Activated B cell treated with CpG ODN at 0.5 μM for 24 hours (primary cell): ENCODE measurements at regions of chr17 and their contacts with region 1.

Region 1: GRCh38 chr17:74212913-74213791 is at the start of gene TTYH2:
- DNase-seq: peak; percentile 66
- ATAC-seq: peak; percentile 77
- H3K4me3 Mint-ChIP-seq: peak within 1 kb of the TSS; percentile 86
- H3K27ac Mint-ChIP-seq: peak within 1 kb of the TSS; percentile 89
- H3K4me1 Mint-ChIP-seq: peaks cover 48% of the 10 kb centered on the region
- H3K27me3 Mint-ChIP-seq: no peaks in the 10 kb centered on the region
- CTCF ChIP-seq: no peak
- total RNA-seq, gene TTYH2: 2.9 and 3.8 TPM in 2 replicates

Region 2: DNA sequence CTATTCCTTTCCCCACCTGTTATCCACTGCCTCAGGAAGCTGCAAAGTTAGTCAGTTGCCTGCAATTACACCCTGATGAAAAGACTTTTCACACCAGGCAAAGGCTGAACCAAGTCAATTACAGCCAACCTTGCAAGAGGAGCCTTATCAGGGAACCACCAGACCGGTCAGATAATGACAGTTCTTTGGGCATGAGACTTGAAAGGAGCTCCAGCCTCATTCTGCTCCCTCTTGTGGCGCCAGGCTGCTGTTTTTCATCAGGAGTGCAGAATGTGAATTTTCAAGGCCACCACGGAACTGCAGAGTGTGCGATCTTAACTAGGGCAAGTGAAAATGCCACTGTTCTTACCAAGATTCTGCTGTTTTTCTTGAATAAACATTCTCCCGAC is 83.4 kb after region 1 on chr17:
- CTCF ChIA-PET with region 1: no interaction called
- POLR2A ChIA-PET with region 1: no interaction called
- intact Hi-C with region 1: loop called (anchors 1 kb)
- DNase-seq: no peak
- ATAC-seq: no peak
- H3K4me3 Mint-ChIP-seq: no peak overlapping the region
- H3K27ac Mint-ChIP-seq: no peak overlapping the region
- H3K4me1 Mint-ChIP-seq: no peaks in the 10 kb centered on the region
- H3K27me3 Mint-ChIP-seq: peaks cover 25% of the 10 kb centered on the region
- CTCF ChIP-seq: no peak

Region 3: DNA sequence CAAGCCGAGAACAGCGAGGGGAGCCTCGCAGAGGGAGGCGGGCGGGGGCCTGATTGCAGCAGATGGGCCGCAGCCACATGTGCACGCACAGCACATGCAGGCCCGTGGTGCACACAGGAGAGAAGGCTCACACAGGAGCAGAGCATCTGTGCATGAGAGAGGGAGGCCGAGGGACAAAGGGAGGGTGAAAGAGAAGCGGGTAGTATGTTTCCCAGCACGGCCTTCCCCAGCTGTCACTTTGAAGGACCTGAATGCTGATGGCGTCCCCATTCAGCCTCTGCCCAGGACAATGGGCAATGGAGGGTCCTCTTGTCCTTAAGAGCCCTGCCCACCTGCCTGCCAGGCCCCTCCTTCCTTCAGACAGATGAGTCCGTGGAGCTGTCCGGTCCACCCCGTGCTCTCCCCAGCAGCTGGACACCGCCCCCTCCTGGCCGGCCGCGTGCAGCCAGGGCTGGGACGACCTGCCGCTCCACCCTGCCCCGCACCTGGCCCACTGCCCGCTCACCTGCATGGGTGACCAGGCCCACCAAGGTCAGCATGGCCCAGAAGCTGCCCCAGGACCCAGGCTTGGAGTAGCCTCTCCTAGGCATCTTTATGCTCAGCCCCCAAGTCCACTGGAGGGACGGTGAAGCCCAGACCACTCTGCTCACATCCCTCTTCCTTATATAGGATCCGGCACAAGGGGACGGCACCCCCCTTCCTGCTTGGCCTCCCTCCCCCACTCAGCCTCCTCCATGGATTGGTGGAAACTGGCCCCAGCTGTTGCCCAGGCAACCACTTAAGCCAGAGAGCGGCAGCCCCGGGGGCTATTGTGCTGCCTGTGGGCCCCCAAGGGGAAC is 148.3 kb after region 1 on chr17 and contains the start of gene BTBD17:
- CTCF ChIA-PET with region 1: interaction called, 3 read pairs
- POLR2A ChIA-PET with region 1: no interaction called
- intact Hi-C with region 1: loop called (anchors 2 kb)
- DNase-seq: no peak
- ATAC-seq: peak; percentile 34
- H3K4me3 Mint-ChIP-seq: no peak within 1 kb of the TSS
- H3K27ac Mint-ChIP-seq: no peak within 1 kb of the TSS
- H3K4me1 Mint-ChIP-seq: peaks cover 2% of the 10 kb centered on the region
- H3K27me3 Mint-ChIP-seq: peaks cover 30% of the 10 kb centered on the region
- CTCF ChIP-seq: no peak
- total RNA-seq, gene BTBD17: not detected in 2 replicates